Heart right ventricle (tissue), 16 donors: ENCODE measurements at regions of chr10 and their contacts with region 1.

Region 1: GRCh38 chr10:69303632-69304051 is 25.3 kb downstream of the HK1 start:
- DNase-seq: no peak
- ATAC-seq: no peak
- H3K4me3 ChIP-seq: no peak overlapping the region
- H3K27ac ChIP-seq: no peak overlapping the region
- H3K4me1 ChIP-seq: no peaks in the 10 kb centered on the region
- H3K27me3 ChIP-seq: no peaks in the 10 kb centered on the region
- CTCF ChIP-seq: no peak

Region 2: DNA sequence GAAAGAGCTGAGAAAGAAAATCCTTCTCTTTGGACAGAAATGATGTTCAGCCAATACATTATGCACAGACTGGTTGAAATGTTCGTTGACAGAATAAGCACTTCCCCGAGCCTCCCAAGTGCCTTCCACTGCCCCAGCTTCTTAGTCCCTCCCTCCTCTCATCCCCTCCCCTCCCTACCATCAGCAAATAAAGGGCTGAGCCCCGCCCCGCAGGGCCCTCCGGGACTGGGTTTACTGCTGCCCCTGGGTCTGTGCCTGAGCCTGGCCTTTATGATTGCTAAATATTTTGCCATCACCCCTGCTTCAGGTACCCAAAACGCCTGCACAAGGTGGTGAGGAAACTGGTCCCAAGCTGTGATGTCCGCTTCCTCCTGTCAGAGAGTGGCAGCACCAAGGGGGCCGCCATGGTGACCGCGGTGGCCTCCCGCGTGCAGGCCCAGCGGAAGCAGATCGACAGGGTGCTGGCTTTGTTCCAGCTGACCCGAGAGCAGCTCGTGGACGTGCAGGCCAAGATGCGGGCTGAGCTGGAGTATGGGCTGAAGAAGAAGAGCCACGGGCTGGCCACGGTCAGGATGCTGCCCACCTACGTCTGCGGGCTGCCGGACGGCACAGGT is 55.4 kb before region 1 on chr10:
- intact Hi-C with region 1: loop called in 3 of 10 experiments (anchors 5 to 10 kb)
- DNase-seq: no peak
- ATAC-seq: no peak
- H3K4me3 ChIP-seq: no peak overlapping the region
- H3K27ac ChIP-seq: no peak overlapping the region
- H3K4me1 ChIP-seq: no peaks in the 10 kb centered on the region
- H3K27me3 ChIP-seq: no peaks in the 10 kb centered on the region
- CTCF ChIP-seq: no peak

Region 3: GRCh38 chr10:69389827-69390490 is 86.3 kb after region 1 on chr10:
- intact Hi-C with region 1: no loop called
- DNase-seq: peak; percentile 35 to 46
- ATAC-seq: peak in 6 of 8 donors; percentile 41 to 68 (median 54)
- H3K4me3 ChIP-seq: no peak overlapping the region
- H3K27ac ChIP-seq: peak overlapping the region in 3 of 10 donors; percentile 6 to 35 (median 25)
- H3K4me1 ChIP-seq: peaks cover 8 to 36% (median 25%) of the 10 kb centered on the region in 9 donors
- H3K27me3 ChIP-seq: no peaks in the 10 kb centered on the region
- CTCF ChIP-seq: no peak